ENCODE measurements at regions of chr18 and their contacts with region 1.

Region 1: GRCh38 chr18:45467293-45467692 is 148.0 kb upstream of the SLC14A2 start:
- DNase-seq: no peak
- ATAC-seq: peak in 1 of 4 donors; percentile 27
- H3K4me3 ChIP-seq: no peak overlapping the region
- H3K27ac ChIP-seq: no peak overlapping the region
- H3K4me1 ChIP-seq: no peaks in the 10 kb centered on the region
- H3K27me3 ChIP-seq: no peaks in the 10 kb centered on the region
- CTCF ChIP-seq: no peak

Region 2: GRCh38 chr18:45402485-45403056 is 64.7 kb before region 1 on chr18:
- intact Hi-C with region 1: loop called in 1 of 2 experiments (anchors 10 kb)
- DNase-seq: no peak
- ATAC-seq: peak; percentile 36 to 89 (median 75)
- H3K4me3 ChIP-seq: no peak overlapping the region
- H3K27ac ChIP-seq: no peak overlapping the region
- H3K4me1 ChIP-seq: no peaks in the 10 kb centered on the region
- H3K27me3 ChIP-seq: no peaks in the 10 kb centered on the region
- CTCF ChIP-seq: no peak

Region 3: GRCh38 chr18:45517181-45517741 is 50.0 kb after region 1 on chr18:
- intact Hi-C with region 1: no loop called
- DNase-seq: peak; percentile 57 to 78
- ATAC-seq: peak; percentile 23 to 67 (median 54)
- H3K4me3 ChIP-seq: no peak overlapping the region
- H3K27ac ChIP-seq: no peak overlapping the region
- H3K4me1 ChIP-seq: no peaks in the 10 kb centered on the region
- H3K27me3 ChIP-seq: no peaks in the 10 kb centered on the region
- CTCF ChIP-seq: no peak